T-cell (primary cell): ENCODE measurements at regions of chr17 and their contacts with region 1.

Region 1: GRCh38 chr17:17752089-17752820 is 71.0 kb downstream of the RAI1 start:
- DNase-seq: peak; percentile 92 to 99 (median 96)
- ATAC-seq: peak; percentile 90 to 93 (median 92)
- H3K4me3 ChIP-seq: peak overlapping the region; percentile 71 to 83
- H3K4me3 Mint-ChIP-seq: peak overlapping the region; percentile 81 to 94 (median 89)
- H3K27ac ChIP-seq: peak overlapping the region; percentile 97
- H3K27ac Mint-ChIP-seq: peak overlapping the region; percentile 95 to 97
- H3K4me1 ChIP-seq: peaks cover 54 to 82% of the 10 kb centered on the region in 2 experiments
- H3K4me1 Mint-ChIP-seq: peaks cover 73 to 83% (median 77%) of the 10 kb centered on the region in 3 donors
- H3K27me3 ChIP-seq: no peaks in the 10 kb centered on the region
- H3K27me3 Mint-ChIP-seq: no peaks in the 10 kb centered on the region

Region 2: GRCh38 chr17:17682737-17683680 is 69.2 kb before region 1 on chr17:
- CTCF ChIA-PET with region 1: no interaction called
- POLR2A ChIA-PET with region 1: interaction called in 1 of 2 experiments, 10 read pairs
- DNase-seq: peak in 34 of 35 experiments; percentile 38 to 87 (median 64)
- ATAC-seq: peak; percentile 44 to 71 (median 49)
- H3K4me3 ChIP-seq: peak overlapping the region; percentile 70 to 73
- H3K4me3 Mint-ChIP-seq: peak overlapping the region; percentile 78 to 83 (median 83)
- H3K27ac ChIP-seq: peak overlapping the region; percentile 78
- H3K27ac Mint-ChIP-seq: peak overlapping the region; percentile 21 to 55
- H3K4me1 ChIP-seq: peaks cover 4 to 28% of the 10 kb centered on the region in 2 experiments
- H3K4me1 Mint-ChIP-seq: peaks cover 31 to 49% (median 33%) of the 10 kb centered on the region in 3 donors
- H3K27me3 ChIP-seq: peaks cover 0 to 20% of the 10 kb centered on the region in 2 experiments
- H3K27me3 Mint-ChIP-seq: no peaks in the 10 kb centered on the region